Activated CD4-positive, alpha-beta T cell treated with anti-CD3 and anti-CD28 coated beads, Interleukin-2, amount 10 ng/mL, durations not matched to agents 24 days and 14 days (primary cell): ENCODE measurements at regions of chr1 and their contacts with region 1.

Region 1: DNA sequence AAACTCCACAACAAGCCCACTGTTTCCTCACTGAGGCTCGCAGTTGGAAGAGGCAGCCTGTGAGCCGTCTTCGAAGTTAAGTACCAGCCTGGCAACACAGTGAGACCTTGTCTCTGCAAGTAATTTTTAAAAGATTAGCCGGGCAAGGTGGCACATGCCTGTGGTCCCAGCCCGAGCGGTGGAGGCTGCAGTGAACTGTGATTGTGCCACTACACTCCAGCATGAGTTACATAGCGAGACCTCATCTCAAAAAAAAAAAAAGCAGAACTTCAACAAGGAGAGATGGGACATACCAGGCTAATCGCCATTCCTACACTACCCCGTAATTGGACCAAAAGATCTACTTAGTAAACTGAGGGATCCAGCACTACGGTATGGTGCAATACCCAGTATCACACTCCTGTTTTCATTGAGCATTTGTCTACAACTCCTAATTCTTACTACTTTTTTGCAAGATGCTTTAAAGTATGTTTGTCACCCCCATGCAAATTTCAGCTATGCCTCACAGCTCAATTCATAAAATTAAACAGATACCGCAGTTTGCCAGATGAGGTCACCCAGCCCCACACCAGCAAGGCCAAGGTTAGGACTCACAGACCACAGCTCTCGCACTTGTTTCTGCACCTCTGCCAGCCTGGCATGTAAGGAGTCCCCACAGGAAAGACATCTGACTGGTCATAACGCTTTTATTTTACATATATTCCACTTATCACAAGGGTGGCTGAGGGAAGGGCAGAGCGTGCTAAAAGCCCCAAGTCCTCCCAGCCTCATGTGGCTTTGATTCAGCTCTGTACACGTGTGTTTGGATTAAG is 21.0 kb downstream of the SDE2 start:
- DNase-seq: no peak
- H3K4me3 Mint-ChIP-seq: no peak overlapping the region
- H3K27ac Mint-ChIP-seq: peak overlapping the region; percentile 36
- H3K4me1 Mint-ChIP-seq: peaks cover 4% of the 10 kb centered on the region
- H3K27me3 Mint-ChIP-seq: no peaks in the 10 kb centered on the region

Region 2: GRCh38 chr1:225318706-225319575 is 659.2 kb before region 1 on chr1:
- intact Hi-C with region 1: loop called (anchors 2 kb)
- DNase-seq: peak; percentile 72
- H3K4me3 Mint-ChIP-seq: no peak overlapping the region
- H3K27ac Mint-ChIP-seq: no peak overlapping the region
- H3K4me1 Mint-ChIP-seq: no peaks in the 10 kb centered on the region
- H3K27me3 Mint-ChIP-seq: peaks cover 5% of the 10 kb centered on the region

Region 3: GRCh38 chr1:225474986-225475820 is 502.9 kb before region 1 on chr1:
- intact Hi-C with region 1: loop called (anchors 1 kb)
- DNase-seq: peak; percentile 93
- H3K4me3 Mint-ChIP-seq: no peak overlapping the region
- H3K27ac Mint-ChIP-seq: no peak overlapping the region
- H3K4me1 Mint-ChIP-seq: peaks cover 38% of the 10 kb centered on the region
- H3K27me3 Mint-ChIP-seq: no peaks in the 10 kb centered on the region

Region 4: DNA sequence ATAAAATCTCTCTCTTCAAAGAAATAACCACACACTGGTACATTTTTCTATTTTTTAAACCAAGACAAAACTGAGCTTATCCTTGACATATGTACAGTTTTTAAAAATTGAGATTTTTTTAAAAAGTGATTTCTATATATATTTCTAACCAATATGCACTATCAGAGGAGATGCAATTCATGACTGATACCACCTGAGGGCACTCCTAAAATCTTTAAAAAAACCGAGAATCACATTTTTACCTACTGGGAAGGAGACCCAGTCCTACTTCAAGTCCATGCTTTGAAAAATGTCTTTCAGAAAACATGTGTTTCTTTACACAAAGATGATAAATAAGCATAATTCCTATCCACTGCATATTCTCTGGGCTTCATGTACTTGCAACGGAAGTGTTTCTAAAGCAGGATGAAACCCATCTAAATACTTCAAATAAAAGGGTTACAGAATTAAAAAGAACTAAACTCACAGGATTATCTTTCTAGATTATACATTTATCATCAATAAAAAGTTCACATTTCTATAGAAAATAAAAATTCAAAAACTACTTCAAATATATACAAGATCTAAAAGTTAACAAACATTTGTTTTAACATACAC is 423.8 kb before region 1 on chr1:
- intact Hi-C with region 1: loop called (anchors 5 kb)
- DNase-seq: no peak
- H3K4me3 Mint-ChIP-seq: no peak overlapping the region
- H3K27ac Mint-ChIP-seq: no peak overlapping the region
- H3K4me1 Mint-ChIP-seq: no peaks in the 10 kb centered on the region
- H3K27me3 Mint-ChIP-seq: peaks cover 12% of the 10 kb centered on the region

Region 5: DNA sequence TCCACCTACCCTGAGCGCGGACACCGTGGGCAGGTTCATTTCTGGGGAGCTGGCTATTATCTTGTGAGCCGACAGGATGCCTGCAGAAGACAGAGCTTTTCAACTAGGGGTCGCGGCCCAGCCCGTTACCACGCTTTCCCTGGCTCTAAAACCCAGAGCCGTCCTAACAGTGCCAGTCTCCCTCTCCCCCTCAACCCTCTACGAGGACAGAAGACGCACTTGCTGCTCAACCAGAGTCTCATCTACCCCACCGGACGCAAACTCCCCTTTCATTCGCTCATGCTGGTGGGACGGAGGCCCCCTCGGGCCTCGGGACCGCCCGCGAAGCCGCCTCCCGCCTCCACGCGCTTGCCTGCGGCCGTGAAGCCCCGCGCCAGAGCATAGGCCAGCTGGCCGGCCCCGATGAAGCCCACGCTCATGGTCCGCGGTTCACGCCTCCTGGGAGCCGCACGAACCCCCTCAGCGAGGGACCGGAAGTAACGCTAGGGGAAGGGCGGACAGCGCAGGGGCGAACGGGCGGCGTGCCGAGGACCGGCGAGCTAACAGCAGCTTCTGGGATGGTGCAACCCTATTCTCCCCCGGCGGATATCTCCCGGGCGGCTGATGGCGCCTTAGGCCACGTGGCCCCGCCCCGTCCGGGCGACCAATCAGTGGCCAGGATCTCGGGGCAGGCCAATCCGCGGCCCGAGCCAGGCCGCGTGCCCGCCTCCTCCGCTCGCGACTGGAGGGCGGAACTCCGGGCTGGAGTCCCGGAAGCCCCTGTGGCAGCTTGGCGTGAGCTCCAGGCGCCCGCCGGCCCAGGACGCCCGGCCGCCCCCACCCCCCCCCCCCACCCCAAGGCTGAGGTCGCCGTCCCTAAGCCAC is 54.2 kb before region 1 on chr1 and contains the start of gene PYCR2:
- intact Hi-C with region 1: loop called (anchors 5 kb)
- DNase-seq: peak; percentile 99
- H3K4me3 Mint-ChIP-seq: peak within 1 kb of the TSS; percentile 97
- H3K27ac Mint-ChIP-seq: peak within 1 kb of the TSS; percentile 95
- H3K4me1 Mint-ChIP-seq: peaks cover 39% of the 10 kb centered on the region
- H3K27me3 Mint-ChIP-seq: no peaks in the 10 kb centered on the region
- total RNA-seq, gene PYCR2: 144 and 150 TPM in 2 replicates

Region 6: DNA sequence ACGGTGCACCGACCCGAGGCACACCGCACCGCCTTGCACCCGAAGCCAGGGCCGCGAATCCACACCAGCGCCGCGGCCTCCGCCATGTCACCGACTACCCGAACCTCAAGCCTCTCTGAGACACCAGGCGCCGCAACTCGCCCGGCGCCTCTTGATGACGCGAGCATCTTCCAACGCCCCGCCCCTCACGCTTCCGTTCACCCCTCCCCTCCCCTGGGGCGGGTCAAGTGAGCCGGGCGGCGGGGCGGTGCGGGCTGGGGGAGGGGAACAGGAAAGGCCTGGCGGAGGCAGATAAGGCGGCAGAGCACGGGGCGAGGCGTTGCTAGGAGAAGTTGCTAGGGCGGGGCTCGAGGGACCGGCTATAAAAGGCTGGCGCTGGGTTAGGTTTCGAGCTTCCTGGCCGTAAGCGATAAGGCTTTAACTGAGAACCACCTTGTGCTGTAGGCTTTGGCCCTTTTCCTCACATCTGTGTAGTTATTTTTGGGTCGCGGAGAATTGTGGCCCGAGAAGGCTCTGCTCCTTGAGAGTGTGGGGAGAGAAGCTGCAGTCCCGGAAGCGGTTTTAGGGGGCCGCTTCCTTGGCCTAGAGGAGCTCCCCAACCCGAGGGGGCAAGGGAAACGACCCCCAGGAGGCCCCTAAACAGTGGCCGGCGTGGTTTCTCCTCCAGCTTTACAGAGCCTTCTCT is 21.2 kb after region 1 on chr1 and contains the start of gene SDE2:
- intact Hi-C with region 1: no loop called
- DNase-seq: peak; percentile 100
- H3K4me3 Mint-ChIP-seq: peak within 1 kb of the TSS; percentile 97
- H3K27ac Mint-ChIP-seq: peak within 1 kb of the TSS; percentile 99
- H3K4me1 Mint-ChIP-seq: peaks cover 53% of the 10 kb centered on the region
- H3K27me3 Mint-ChIP-seq: no peaks in the 10 kb centered on the region
- total RNA-seq, gene SDE2: 26.9 and 27.1 TPM in 2 replicates

Region 7: GRCh38 chr1:226411619-226412018 is 433.5 kb after region 1 on chr1:
- intact Hi-C with region 1: no loop called
- DNase-seq: no peak
- H3K4me3 Mint-ChIP-seq: no peak overlapping the region
- H3K27ac Mint-ChIP-seq: no peak overlapping the region
- H3K4me1 Mint-ChIP-seq: peaks cover 9% of the 10 kb centered on the region
- H3K27me3 Mint-ChIP-seq: peaks cover 21% of the 10 kb centered on the region